ENCODE measurements at regions of chr12 and their contacts with region 1.

Region 1: GRCh38 chr12:122995503-122996187 is 15.2 kb downstream of the ARL6IP4 start:
- DNase-seq: no peak
- H3K4me3 ChIP-seq: no peak overlapping the region
- H3K27ac ChIP-seq: peak overlapping the region; percentile 4
- H3K4me1 ChIP-seq: peaks cover 12% of the 10 kb centered on the region
- H3K27me3 ChIP-seq: no peaks in the 10 kb centered on the region
- CTCF ChIP-seq: no peak
- POLR2A ChIP-seq: no peak

Region 2: GRCh38 chr12:123050331-123050831 is 54.7 kb after region 1 on chr12:
- intact Hi-C with region 1: loop called (anchors 2 kb)
- DNase-seq: no peak
- H3K4me3 ChIP-seq: no peak overlapping the region
- H3K27ac ChIP-seq: peak overlapping the region; percentile 58
- H3K4me1 ChIP-seq: peaks cover 24% of the 10 kb centered on the region
- H3K27me3 ChIP-seq: no peaks in the 10 kb centered on the region
- CTCF ChIP-seq: no peak
- POLR2A ChIP-seq: no peak